ENCODE measurements at regions of chr17 and their contacts with region 1.

Region 1: DNA sequence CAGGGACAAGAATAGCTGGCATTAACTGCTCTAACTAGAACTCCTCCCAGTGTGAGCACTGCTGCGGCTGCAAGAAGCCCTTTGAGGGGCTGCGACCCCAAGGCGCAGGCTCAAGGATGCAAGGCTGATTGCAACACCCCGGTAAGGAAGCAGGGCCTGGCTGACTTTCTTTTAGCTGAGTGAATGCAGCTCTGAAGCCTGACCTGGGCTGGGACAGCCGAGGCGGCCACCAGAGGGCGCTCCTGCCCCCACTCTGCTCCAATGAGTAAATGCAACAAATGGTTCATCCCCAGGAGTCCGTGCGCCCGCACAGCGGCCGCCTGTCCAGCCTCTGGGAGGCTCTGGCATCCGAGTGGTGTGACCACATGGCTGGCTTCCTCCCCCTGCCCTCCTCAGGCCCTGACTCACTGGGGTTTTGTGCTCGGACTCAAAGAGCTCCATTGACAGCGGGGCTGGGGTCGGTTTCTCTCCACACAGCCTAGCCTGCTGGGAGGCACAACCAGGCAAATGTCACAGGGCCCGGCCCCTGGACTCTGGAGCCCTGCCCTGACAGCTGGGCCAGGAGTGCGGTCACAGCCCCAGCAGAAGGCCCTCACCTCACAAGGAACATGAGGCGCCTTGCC is at the start of gene SMIM5:
- H3K4me3 ChIP-seq: no peak within 1 kb of the TSS
- H3K27ac ChIP-seq: no peak within 1 kb of the TSS
- H3K4me1 ChIP-seq: peaks cover 11% of the 10 kb centered on the region
- CTCF ChIP-seq: peak; percentile 83

Region 2: DNA sequence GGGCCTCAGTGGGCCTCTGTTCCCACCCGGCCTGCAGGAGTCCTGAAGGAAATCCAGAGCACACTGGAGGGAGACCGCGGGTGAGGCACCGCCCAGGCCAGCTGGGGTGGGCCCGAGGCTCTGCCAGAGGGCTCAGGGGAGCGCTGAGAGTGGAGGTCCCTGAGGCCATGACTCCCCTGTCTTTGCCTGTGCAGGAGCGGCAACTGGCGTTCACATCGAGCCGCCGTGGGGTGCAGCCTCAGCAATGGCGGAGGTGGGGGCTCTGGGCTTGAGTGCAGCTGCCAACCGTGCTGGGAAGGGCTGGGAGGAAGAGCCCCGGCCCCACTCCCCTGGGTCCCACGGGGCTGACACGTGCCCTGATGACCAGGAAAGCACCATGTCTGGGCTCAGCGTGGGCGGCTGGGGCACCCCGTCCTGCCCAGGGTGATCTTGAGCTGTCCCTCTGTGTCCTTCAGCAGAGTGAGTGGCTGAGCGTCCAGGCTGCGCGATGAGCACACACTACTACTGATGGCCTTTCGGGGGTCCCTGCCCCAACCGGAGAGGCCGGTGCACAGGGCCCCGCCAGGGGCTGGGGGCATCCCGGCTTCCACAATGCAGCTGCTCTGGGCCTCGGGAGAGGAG is 58.4 kb before region 1 on chr17:
- CTCF ChIA-PET with region 1: interaction called, 14 read pairs
- POLR2A ChIA-PET with region 1: interaction called, 3 read pairs
- H3K4me3 ChIP-seq: no peak overlapping the region
- H3K27ac ChIP-seq: no peak overlapping the region
- H3K4me1 ChIP-seq: no peaks in the 10 kb centered on the region; the same call in 1 of the 2 replicates
- CTCF ChIP-seq: no peak

Region 3: GRCh38 chr17:75614006-75614405 is 19.0 kb before region 1 on chr17:
- CTCF ChIA-PET with region 1: interaction called, 36 read pairs
- POLR2A ChIA-PET with region 1: interaction called, 3 read pairs
- H3K4me3 ChIP-seq: no peak overlapping the region
- H3K27ac ChIP-seq: no peak overlapping the region
- H3K4me1 ChIP-seq: no peaks in the 10 kb centered on the region
- CTCF ChIP-seq: no peak

Region 4: DNA sequence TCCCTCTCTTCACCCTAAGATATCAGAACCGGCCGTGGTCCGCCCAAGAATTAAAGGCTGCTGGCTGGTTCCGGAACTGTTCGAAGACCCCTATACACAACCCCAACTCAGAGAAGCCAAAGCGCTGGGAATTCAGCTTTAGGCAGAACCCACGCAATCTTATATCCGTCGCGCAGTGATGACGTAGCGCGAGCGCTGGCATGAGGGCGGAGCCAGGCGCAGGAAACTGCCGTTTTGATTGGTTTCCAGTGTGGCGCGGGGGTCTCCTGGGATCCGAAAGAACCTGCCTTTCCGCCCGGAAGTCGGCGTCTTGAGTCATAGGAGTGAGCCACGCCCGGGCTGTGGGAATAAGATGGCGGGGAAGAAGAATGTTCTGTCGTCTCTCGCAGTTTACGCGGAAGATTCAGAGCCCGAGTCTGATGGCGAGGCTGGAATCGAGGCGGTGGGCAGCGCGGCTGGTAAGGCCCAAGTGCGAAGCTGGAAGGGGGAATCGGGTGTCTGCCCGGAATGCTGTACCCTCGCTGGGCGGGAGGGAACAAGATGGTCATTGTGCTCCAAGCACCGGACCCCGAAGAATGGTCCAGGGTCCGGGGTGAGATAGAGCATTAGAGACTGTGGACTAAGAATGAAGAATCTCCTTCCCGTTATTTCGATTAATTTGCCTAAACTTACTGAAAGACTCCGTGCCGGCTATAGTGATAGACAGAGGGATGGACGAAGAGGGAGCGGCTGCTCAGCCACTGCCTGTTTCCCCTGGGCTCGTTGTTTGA is 34.2 kb after region 1 on chr17 and contains the starts of genes RECQL5 and SAP30BP:
- CTCF ChIA-PET with region 1: interaction called, 410 read pairs
- POLR2A ChIA-PET with region 1: interaction called, 8 read pairs
- H3K4me3 ChIP-seq: peak within 1 kb of the TSS; percentile 95
- H3K27ac ChIP-seq: 0 out of 2 replicates have a peak within 1 kb of the TSS, but pooled peaks have one; percentile 42
- H3K4me1 ChIP-seq: peaks cover 10% of the 10 kb centered on the region; the same call in 1 of the 2 replicates
- CTCF ChIP-seq: no peak

Region 5: DNA sequence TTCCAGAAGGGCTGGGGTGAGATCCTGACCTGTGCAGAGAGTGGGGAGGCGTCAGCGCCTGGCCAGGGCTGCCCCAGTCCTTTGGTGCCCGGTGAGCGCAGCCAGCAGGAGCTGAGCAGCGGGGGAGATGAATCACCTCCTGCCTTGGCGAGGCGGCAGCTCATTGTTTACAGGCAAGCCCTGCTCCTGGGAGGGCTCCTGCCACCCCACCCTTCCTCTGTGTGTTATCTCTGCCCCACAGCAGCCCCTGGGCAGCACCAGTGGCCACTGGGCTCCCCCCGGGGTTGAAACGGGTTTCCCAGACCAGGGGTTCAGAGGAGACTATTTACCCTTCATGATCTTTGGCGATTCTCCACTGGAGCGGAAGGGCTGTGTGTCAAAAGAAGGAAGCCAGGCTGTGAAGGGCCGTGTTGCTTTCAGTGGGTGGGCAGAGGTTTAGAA is 74.2 kb after region 1 on chr17:
- CTCF ChIA-PET with region 1: interaction called, 15 read pairs
- POLR2A ChIA-PET with region 1: no interaction called
- H3K4me3 ChIP-seq: no peak overlapping the region
- H3K27ac ChIP-seq: no peak overlapping the region
- H3K4me1 ChIP-seq: no peaks in the 10 kb centered on the region
- CTCF ChIP-seq: no peak